ENCODE measurements at regions of chr12 and their contacts with region 1.

Region 1: DNA sequence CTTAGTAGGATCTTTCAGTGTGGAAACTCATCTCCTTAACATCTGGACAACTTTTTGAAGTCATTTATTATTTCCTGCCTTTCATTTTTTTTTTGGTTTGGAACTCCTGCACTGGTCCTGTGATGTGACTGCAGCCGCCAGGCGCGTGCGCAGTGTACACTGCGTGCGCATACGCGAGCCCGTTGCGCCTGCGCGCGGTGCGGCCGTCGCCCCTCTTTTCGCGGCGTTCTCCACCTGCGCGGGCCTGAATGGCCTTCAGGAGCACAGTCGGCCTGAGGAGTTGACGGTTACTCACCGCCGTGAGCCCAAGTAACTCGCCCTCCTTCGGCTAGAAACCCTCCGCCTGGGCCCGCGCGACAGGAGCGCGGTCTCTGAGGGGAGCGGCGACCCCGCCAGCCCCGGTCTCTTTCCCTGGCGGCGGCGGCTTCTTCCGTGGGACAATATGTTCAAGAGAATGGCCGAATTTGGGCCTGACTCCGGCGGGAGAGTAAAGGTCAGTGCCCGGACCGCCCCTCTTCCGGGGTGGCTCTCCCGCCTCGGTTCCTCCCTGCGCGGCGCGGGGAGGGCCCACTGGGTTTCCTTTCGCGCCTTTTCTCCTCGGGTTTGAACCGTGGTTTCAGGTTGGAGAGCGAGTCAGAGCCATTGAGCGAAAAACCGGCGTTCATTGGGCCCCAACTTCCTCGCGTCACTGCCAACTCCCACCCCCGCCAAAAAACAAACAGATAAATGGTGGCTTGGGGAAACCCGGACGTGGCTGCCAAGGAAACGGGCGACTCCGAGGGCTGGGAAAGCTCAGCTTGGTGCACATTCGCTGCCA is at the start of gene YEATS4:
- DNase-seq: peak; percentile 93
- CTCF ChIP-seq: no peak

Region 2: DNA sequence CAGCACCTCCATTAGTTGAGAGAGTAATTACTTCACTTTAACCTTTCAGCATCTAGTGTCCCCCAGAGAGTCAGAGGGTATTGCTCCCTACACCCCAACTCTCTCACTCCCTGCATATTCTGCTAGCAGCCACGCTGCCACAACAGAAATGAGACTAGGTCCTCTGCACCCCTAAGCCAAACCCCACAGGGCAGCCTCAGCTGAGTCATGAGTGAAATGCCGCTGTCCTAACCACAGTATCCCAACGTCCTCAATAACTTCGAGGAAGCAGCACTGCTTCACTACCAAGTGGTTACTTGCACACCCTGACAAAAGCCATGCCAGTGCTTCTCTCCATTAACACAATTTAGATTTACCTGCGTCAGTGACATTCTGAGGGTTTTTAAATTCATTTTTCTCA is 18.4 kb before region 1 on chr12:
- CTCF ChIA-PET with region 1: interaction called, 26 read pairs
- POLR2A ChIA-PET with region 1: no interaction called
- DNase-seq: no peak
- CTCF ChIP-seq: no peak

Region 3: DNA sequence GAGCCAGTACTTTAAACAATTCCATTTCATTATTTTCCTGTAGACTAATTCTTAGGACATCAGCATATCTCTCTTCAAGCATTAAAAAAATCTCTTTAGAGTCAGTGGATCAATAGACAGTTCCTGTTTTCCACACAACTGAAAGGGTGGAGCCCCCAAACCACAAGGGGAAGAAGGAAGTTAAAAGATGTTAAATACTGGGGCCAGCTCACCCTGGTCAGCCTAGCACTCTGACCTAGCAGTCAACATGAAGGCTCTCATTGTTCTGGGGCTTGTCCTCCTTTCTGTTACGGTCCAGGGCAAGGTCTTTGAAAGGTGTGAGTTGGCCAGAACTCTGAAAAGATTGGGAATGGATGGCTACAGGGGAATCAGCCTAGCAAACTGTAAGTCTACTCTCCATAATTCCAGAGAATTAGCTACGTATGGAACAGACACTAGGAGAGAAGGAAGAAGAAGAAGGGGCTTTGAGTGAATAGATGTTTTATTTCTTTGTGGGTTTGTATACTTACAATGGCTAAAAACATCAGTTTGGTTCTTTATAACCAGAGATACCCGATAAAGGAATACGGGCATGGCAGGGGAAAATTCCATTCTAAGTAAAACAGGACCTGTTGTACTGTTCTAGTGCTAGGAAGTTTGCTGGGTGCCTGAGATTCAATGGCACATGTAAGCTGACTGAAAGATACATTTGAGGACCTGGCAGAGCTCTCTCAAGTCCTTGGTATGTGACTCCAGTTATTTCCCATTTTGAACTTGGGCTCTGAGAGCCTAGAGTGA is 11.4 kb before region 1 on chr12 and contains the start of gene LYZ:
- CTCF ChIA-PET with region 1: interaction called, 26 read pairs
- POLR2A ChIA-PET with region 1: no interaction called
- DNase-seq: no peak
- CTCF ChIP-seq: no peak